Activated CD8-positive, alpha-beta memory T cell treated with anti-CD3 and anti-CD28 coated beads, Interleukin-2, amount 10 ng/mL, durations not matched to agents 7 days and 5 days (primary cell): ENCODE measurements at regions of chr20 and their contacts with region 1.

Region 1: GRCh38 chr20:54078296-54078984 is 8.0 kb upstream of the BCAS1 start:
- DNase-seq: peak; percentile 77
- ATAC-seq: peak; percentile 79
- H3K4me3 Mint-ChIP-seq: peak overlapping the region; percentile 53
- H3K27ac Mint-ChIP-seq: peak overlapping the region; percentile 90
- H3K4me1 Mint-ChIP-seq: peaks cover 33% of the 10 kb centered on the region
- H3K27me3 Mint-ChIP-seq: peaks cover 2% of the 10 kb centered on the region

Region 2: GRCh38 chr20:54062812-54063280 is 15.6 kb before region 1 on chr20:
- CTCF ChIA-PET with region 1: interaction called, 11 read pairs
- DNase-seq: no peak
- ATAC-seq: peak; percentile 59
- H3K4me3 Mint-ChIP-seq: no peak overlapping the region
- H3K27ac Mint-ChIP-seq: no peak overlapping the region
- H3K4me1 Mint-ChIP-seq: peaks cover 42% of the 10 kb centered on the region
- H3K27me3 Mint-ChIP-seq: no peaks in the 10 kb centered on the region

Region 3: DNA sequence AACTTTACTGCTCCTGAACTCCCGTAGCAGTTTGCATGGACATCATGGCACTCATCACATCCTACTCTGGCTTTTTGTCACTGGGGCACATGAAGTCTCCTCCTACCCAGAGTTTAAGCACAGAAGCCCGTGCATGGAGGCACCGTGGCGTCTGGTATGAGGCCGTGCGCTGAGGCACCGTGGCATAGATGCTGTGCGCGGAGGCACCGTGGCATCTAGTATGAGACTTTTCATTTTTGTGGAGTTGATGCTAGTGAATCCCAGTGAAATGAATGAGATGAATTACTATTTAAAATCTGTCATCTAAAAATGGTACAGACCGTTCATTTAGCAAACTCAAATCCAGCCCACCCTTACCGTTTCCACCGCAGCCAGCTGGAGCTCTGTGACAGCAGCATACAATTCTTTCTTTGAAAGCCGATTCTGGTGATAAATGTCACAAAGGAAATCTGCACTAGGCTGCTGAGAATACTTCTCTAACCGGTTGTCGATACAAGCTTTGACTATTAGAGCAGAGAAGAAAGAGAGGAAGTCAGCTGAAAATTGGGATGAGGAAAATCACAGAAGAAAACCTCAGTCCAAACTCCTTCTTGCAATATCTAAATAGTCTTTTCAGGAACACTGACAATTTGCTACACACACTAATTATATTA is 84.0 kb after region 1 on chr20:
- CTCF ChIA-PET with region 1: no interaction called
- DNase-seq: no peak
- ATAC-seq: no peak
- H3K4me3 Mint-ChIP-seq: no peak overlapping the region
- H3K27ac Mint-ChIP-seq: no peak overlapping the region
- H3K4me1 Mint-ChIP-seq: no peaks in the 10 kb centered on the region
- H3K27me3 Mint-ChIP-seq: peaks cover 34% of the 10 kb centered on the region

Region 4: GRCh38 chr20:54194724-54195438 is 116.4 kb after region 1 on chr20:
- CTCF ChIA-PET with region 1: no interaction called
- DNase-seq: no peak
- ATAC-seq: no peak
- H3K4me3 Mint-ChIP-seq: no peak overlapping the region
- H3K27ac Mint-ChIP-seq: no peak overlapping the region
- H3K4me1 Mint-ChIP-seq: no peaks in the 10 kb centered on the region
- H3K27me3 Mint-ChIP-seq: no peaks in the 10 kb centered on the region

Region 5: GRCh38 chr20:54246564-54246963 is 168.1 kb after region 1 on chr20:
- CTCF ChIA-PET with region 1: no interaction called
- DNase-seq: no peak
- ATAC-seq: no peak
- H3K4me3 Mint-ChIP-seq: no peak overlapping the region
- H3K27ac Mint-ChIP-seq: no peak overlapping the region
- H3K4me1 Mint-ChIP-seq: no peaks in the 10 kb centered on the region
- H3K27me3 Mint-ChIP-seq: peaks cover 3% of the 10 kb centered on the region